ENCODE measurements at regions of chr2 and their contacts with region 1.

Region 1: DNA sequence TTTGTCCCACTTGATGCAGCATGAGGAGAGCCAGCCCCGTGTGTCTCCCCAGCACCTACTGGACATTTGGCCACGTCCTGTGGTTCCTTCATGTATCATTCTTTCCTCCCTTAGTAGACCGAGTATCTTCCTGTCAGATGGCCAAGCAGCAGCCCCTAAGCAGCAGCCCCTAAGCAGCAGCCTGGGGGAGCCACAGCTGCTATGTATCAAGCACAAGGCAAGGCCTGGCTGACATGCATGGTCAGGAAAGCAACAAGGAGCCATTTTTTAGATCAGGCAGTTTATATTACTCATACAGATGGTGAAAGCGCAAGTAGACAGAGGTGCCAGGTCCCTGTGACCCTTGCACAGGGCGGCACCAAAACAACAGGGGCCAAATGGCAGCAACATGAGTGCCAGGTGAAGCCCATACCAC is 22.1 kb downstream of the CHCHD5 start:
- DNase-seq: no peak
- H3K4me3 ChIP-seq: no peak overlapping the region
- H3K27ac ChIP-seq: no peak overlapping the region
- H3K4me1 ChIP-seq: no peaks in the 10 kb centered on the region
- H3K27me3 ChIP-seq: no peaks in the 10 kb centered on the region

Region 2: GRCh38 chr2:112724591-112725525 is 118.4 kb after region 1 on chr2:
- in situ Hi-C with region 1: loop called (anchors 5 kb)
- DNase-seq: peak; percentile 34
- H3K4me3 ChIP-seq: no peak overlapping the region
- H3K27ac ChIP-seq: no peak overlapping the region
- H3K4me1 ChIP-seq: no peaks in the 10 kb centered on the region
- H3K27me3 ChIP-seq: no peaks in the 10 kb centered on the region

Region 3: DNA sequence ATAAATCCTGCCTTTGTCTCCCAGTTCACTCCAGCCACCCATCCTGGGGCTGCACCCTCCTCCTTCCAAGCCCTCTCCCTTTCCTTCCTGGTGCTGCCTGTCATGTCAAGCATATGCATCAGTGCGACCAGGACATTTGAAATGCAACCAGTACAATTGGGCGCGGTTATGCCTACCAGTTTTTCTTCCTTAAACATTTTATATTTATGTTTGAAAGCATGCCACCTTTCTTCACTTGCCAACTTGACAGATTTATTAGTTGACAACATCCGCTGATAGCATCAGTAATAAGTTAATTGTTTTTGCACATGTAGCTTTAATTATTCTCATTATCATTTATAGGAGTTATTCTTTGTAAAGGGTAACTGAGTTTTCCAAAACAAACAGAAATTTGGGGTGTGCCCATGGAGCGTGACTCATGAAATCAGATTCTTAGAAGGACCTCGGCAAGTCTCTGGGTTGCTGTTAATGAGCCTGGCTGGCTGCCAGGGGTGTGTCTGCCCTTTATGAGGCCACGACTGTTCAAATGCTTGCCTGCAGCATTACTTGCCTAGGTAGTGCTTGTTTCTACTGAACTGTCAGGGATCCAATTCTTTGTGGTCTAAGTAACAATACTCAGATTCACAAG is 262.9 kb after region 1 on chr2:
- in situ Hi-C with region 1: no loop called
- DNase-seq: peak; percentile 82
- H3K4me3 ChIP-seq: no peak overlapping the region
- H3K27ac ChIP-seq: no peak overlapping the region
- H3K4me1 ChIP-seq: peaks cover 20% of the 10 kb centered on the region
- H3K27me3 ChIP-seq: no peaks in the 10 kb centered on the region

Region 4: DNA sequence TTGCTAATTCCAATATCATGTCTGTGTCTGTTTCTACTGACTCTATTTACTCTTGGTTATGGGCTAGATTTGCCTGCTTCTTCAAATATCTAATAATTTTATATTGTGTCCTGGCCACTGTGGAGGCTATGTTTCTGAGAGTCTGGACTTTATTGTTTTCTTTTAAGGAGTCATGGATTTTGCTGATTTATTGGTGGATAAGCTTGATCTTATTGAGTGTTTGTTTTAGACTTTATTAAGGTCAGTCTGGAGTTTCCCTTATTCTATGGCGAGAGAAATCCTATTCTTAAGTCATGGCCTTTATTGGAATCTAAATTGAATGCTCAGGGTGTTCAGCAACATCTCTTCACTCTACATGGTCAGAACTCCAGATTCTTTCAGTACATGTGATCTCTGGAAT is 776.0 kb after region 1 on chr2:
- in situ Hi-C with region 1: no loop called
- DNase-seq: no peak
- H3K4me3 ChIP-seq: no peak overlapping the region
- H3K27ac ChIP-seq: no peak overlapping the region
- H3K4me1 ChIP-seq: no peaks in the 10 kb centered on the region
- H3K27me3 ChIP-seq: no peaks in the 10 kb centered on the region

Measured in GM23248 (cell line).